ENCODE measurements at regions of chr15 and their contacts with region 1.

Region 1: DNA sequence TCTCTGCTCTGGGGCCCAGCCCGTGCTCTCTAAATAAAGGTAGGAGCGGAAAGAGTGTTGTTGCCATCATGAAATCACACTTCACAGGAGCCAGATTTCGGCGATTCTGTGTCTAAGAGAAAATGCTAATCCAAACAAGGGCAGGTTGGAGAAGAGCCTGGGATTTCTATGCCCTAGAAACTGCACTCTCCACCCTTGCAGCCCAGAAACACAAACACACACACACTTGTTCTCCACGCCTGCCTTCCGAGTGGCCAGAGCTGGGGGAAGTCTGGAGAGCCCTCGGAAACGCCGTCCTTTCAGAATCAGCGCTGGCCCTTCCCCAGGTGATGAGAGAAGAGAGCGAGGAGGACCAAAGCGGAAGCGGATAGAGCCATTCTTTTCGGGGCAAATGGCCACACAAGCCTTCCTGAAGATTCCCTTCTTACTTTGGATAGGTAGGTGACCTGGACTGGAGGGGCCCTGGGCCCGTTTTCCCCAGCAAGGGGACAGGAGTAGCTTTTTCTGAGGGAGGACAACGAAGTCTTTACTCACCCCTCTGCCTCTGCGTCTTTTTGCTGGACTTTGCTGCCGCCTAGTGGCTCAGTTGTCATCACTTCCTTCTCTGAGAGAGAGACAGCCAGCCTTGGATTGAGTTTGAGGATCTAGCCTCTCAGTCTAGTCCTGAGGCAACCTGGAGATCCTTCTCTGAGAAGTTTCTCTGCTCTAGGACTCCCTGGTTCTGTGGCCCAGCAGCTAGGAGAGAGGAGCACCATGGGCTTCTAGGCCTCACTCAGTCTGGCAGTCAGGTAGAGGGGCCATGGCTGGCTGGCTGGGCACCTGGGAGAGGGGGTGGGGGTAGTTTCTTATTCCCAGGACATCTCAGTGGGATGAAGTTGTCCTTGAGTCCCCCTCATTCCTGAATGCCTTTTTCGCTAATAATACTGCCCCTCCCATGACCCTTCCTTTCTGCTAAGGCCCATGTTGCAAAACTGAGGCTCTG is 37.7 kb downstream of the SENP8 start:
- DNase-seq: peak; percentile 81 to 88
- ATAC-seq: peak; percentile 86 to 98 (median 93)
- H3K4me3 ChIP-seq: peak overlapping the region; percentile 27 to 64 (median 56)
- H3K27ac ChIP-seq: peak overlapping the region in 7 of 10 donors; percentile 2 to 57 (median 30)
- H3K4me1 ChIP-seq: peaks cover 0 to 12% (median 8%) of the 10 kb centered on the region in 9 donors
- H3K27me3 ChIP-seq: no peaks in the 10 kb centered on the region
- CTCF ChIP-seq: peak; percentile 73 to 90 (median 85)

Region 2: GRCh38 chr15:71743861-71744382 is 412.0 kb before region 1 on chr15:
- intact Hi-C with region 1: loop called in 8 of 10 experiments (anchors 2 to 5 kb)
- DNase-seq: peak in 1 of 2 donors; percentile 63
- ATAC-seq: peak in 2 of 8 donors; percentile 31 to 52
- H3K4me3 ChIP-seq: no peak overlapping the region
- H3K27ac ChIP-seq: no peak overlapping the region
- H3K4me1 ChIP-seq: peaks cover 0 to 6% (median 0%) of the 10 kb centered on the region in 9 donors
- H3K27me3 ChIP-seq: no peaks in the 10 kb centered on the region
- CTCF ChIP-seq: peak; percentile 67 to 88 (median 81)

Region 3: DNA sequence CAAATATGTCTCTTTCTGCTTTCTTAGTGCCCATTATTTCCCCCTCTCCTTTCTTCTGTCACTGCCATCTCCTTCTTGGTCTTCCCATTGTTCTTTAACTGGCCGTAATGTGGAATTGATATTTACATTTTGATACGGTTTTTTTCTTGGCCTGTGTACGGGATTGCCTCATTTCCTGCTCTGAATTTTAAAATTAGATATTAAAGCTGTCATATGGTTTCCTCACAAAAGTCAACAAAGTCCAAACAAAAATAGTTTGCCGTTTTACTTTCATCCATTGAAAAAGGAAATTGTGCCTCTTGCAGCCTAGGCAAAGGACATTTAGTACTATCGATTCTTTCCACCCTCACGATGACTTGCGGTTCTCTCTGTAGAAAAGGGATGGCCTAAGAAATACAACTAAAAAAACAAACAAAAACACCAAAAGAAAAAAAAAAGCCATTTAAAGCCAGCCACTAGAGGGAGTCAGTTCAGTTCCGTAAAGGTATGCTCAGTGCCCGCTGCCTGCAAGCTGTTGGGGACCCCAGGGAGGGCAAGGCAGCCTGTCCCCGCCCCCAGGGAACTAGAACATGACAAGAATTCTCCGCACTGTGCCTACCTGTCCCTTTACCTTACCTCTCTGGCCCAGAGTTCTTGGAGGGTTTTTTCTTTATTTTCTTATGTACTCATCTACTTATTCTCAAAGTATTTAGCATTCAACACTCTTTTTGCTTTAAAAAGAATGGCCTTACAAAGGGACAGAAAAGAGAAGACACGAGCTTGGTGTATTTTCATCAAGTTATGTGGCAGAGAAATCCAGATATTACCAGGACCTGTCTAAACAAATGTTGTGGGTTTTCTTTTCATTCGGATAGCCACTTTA is 375.6 kb before region 1 on chr15:
- intact Hi-C with region 1: loop called in 3 of 10 experiments (anchors 2 to 10 kb)
- DNase-seq: no peak
- ATAC-seq: peak in 3 of 8 donors; percentile 27 to 41 (median 35)
- H3K4me3 ChIP-seq: peak overlapping the region in 1 of 10 donors; percentile 18
- H3K27ac ChIP-seq: peak overlapping the region in 3 of 10 donors; percentile 3 to 42 (median 6)
- H3K4me1 ChIP-seq: peaks cover 0 to 18% (median 8%) of the 10 kb centered on the region in 9 donors
- H3K27me3 ChIP-seq: no peaks in the 10 kb centered on the region
- CTCF ChIP-seq: peak; percentile 45 to 75 (median 69)

Region 4: GRCh38 chr15:71891026-71891425 is 264.9 kb before region 1 on chr15:
- intact Hi-C with region 1: loop called in 3 of 10 experiments (anchors 10 kb)
- DNase-seq: peak in 1 of 2 donors; percentile 5
- ATAC-seq: peak; percentile 38 to 98 (median 79)
- H3K4me3 ChIP-seq: no peak overlapping the region
- H3K27ac ChIP-seq: peak overlapping the region in 3 of 10 donors; percentile 33 to 41 (median 37)
- H3K4me1 ChIP-seq: peaks cover 0 to 15% (median 0%) of the 10 kb centered on the region in 9 donors
- H3K27me3 ChIP-seq: no peaks in the 10 kb centered on the region
- CTCF ChIP-seq: no peak

Region 5: GRCh38 chr15:72009222-72009621 is 146.7 kb before region 1 on chr15:
- intact Hi-C with region 1: loop called in 1 of 10 experiments (anchors 10 kb)
- DNase-seq: no peak
- ATAC-seq: no peak
- H3K4me3 ChIP-seq: no peak overlapping the region
- H3K27ac ChIP-seq: no peak overlapping the region
- H3K4me1 ChIP-seq: no peaks in the 10 kb centered on the region
- H3K27me3 ChIP-seq: no peaks in the 10 kb centered on the region
- CTCF ChIP-seq: no peak

Region 6: GRCh38 chr15:72047020-72047419 is 108.9 kb before region 1 on chr15:
- intact Hi-C with region 1: no loop called
- DNase-seq: no peak
- ATAC-seq: no peak
- H3K4me3 ChIP-seq: no peak overlapping the region
- H3K27ac ChIP-seq: no peak overlapping the region
- H3K4me1 ChIP-seq: peaks cover 0 to 16% (median 4%) of the 10 kb centered on the region in 9 donors
- H3K27me3 ChIP-seq: no peaks in the 10 kb centered on the region
- CTCF ChIP-seq: no peak

Region 7: GRCh38 chr15:72117486-72118399 is 38.2 kb before region 1 on chr15 and contains the start of gene MYO9A:
- intact Hi-C with region 1: loop called in 1 of 10 experiments (anchors 2 kb)
- DNase-seq: peak; percentile 98 to 99
- ATAC-seq: peak; percentile 88 to 96 (median 92)
- H3K4me3 ChIP-seq: peak within 1 kb of the TSS; percentile 74 to 98 (median 92)
- H3K27ac ChIP-seq: peak within 1 kb of the TSS; percentile 88 to 99 (median 98)
- H3K4me1 ChIP-seq: peaks cover 0 to 46% (median 26%) of the 10 kb centered on the region in 9 donors
- H3K27me3 ChIP-seq: no peaks in the 10 kb centered on the region
- CTCF ChIP-seq: peak in 5 of 9 donors; percentile 17 to 56 (median 27)
- total RNA-seq, gene MYO9A: 23.4 to 36.9 (median 30.0) TPM